ENCODE measurements at regions of chr11 and their contacts with region 1.

Region 1: GRCh38 chr11:128437137-128437536 is 150.2 kb downstream of the ETS1 start:
- DNase-seq: no peak
- ATAC-seq: no peak
- H3K4me3 ChIP-seq: no peak overlapping the region
- H3K4me3 Mint-ChIP-seq: no peak overlapping the region
- H3K27ac ChIP-seq: no peak overlapping the region
- H3K27ac Mint-ChIP-seq: no peak overlapping the region
- H3K4me1 ChIP-seq: no peaks in the 10 kb centered on the region
- H3K4me1 Mint-ChIP-seq: peaks cover 12% of the 10 kb centered on the region
- H3K27me3 ChIP-seq: no peaks in the 10 kb centered on the region
- H3K27me3 Mint-ChIP-seq: no peaks in the 10 kb centered on the region
- CTCF ChIP-seq: no peak

Region 2: GRCh38 chr11:128399251-128400121 is 37.7 kb before region 1 on chr11:
- CTCF ChIA-PET with region 1: no interaction called
- POLR2A ChIA-PET with region 1: no interaction called
- intact Hi-C with region 1: loop called in 1 of 2 experiments (anchors 2 kb)
- DNase-seq: peak in 1 of 9 experiments; percentile 19
- ATAC-seq: no peak
- H3K4me3 ChIP-seq: no peak overlapping the region
- H3K4me3 Mint-ChIP-seq: no peak overlapping the region
- H3K27ac ChIP-seq: no peak overlapping the region
- H3K27ac Mint-ChIP-seq: no peak overlapping the region
- H3K4me1 ChIP-seq: peaks cover 11% of the 10 kb centered on the region
- H3K4me1 Mint-ChIP-seq: peaks cover 24% of the 10 kb centered on the region
- H3K27me3 ChIP-seq: no peaks in the 10 kb centered on the region
- H3K27me3 Mint-ChIP-seq: no peaks in the 10 kb centered on the region
- CTCF ChIP-seq: no peak

Region 3: DNA sequence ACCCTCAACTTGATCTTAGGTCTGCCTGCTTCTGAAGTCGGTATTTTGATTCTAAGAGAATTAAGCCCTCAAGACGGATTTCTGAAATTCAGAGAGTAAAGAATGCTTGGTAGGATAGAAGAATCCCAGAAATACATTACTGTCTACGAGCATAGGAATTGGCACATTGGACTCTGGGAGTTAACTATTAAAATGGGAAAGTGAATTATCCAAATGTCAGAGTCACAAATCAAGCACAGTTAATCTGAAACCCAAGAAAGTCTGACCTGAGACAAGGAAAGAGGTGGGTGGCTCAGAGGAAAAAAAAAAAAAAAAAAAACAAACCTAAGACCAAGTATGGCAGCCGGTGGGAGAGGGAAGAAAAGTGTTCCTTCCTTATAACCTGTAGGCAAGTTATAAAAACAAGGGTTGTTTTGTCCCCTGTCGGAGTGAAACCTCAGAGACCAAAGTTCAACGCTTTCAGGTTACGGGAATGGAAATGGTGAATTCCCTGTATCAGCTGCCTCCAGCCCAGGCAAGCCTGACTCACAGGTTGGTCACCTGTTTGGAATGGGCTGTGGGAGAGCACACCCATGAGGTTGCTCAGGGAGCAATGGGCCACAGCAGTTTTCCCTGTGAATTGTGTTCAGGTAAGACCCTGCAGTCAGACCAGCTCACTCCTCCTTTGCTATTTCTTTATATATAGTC is 11.2 kb after region 1 on chr11:
- CTCF ChIA-PET with region 1: no interaction called
- POLR2A ChIA-PET with region 1: interaction called, 4 read pairs
- intact Hi-C with region 1: loop called in 1 of 2 experiments (anchors 1 kb)
- DNase-seq: no peak
- ATAC-seq: no peak
- H3K4me3 ChIP-seq: no peak overlapping the region
- H3K4me3 Mint-ChIP-seq: no peak overlapping the region
- H3K27ac ChIP-seq: no peak overlapping the region
- H3K27ac Mint-ChIP-seq: no peak overlapping the region
- H3K4me1 ChIP-seq: peaks cover 11% of the 10 kb centered on the region
- H3K4me1 Mint-ChIP-seq: peaks cover 52% of the 10 kb centered on the region
- H3K27me3 ChIP-seq: no peaks in the 10 kb centered on the region
- H3K27me3 Mint-ChIP-seq: no peaks in the 10 kb centered on the region
- CTCF ChIP-seq: no peak